Common myeloid progenitor, CD34-positive (primary cell): ENCODE measurements at regions of chr6 and their contacts with region 1.

Region 1: GRCh38 chr6:111997078-111997852 is 56.6 kb upstream of the CCN6 start:
- DNase-seq: peak; percentile 75 to 80 (median 78)
- H3K4me3 ChIP-seq: peak overlapping the region in 2 of 7 experiments; percentile 32 to 54
- H3K27ac ChIP-seq: no peak overlapping the region
- H3K4me1 ChIP-seq: peaks cover 0 to 11% (median 6%) of the 10 kb centered on the region in 4 experiments
- H3K27me3 ChIP-seq: peaks cover 0 to 3% (median 0%) of the 10 kb centered on the region in 5 experiments

Region 2: DNA sequence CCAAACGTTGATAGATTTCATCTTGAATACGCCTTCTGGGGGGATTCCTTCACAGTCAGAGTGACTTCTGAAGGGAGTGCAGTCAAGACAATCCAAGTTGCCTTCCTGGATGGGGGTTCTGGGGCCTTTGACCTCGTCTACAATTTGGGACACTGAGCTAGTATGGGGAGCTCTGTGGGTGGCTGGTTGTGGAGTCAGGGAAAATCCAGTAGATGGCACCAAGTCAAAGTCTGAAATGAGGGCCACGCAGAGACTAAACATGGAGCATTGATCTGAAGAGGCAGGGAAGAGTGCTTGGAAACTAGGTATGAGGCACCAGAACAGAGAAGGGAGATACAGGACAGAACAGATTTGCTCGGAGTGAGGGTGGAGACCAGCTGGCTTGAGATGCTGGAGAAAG is 13.1 kb after region 1 on chr6:
- CTCF ChIA-PET with region 1: interaction called, 19 read pairs
- POLR2A ChIA-PET with region 1: no interaction called
- DNase-seq: no peak
- H3K4me3 ChIP-seq: no peak overlapping the region
- H3K27ac ChIP-seq: no peak overlapping the region
- H3K4me1 ChIP-seq: peaks cover 0 to 13% (median 10%) of the 10 kb centered on the region in 4 experiments
- H3K27me3 ChIP-seq: no peaks in the 10 kb centered on the region

Region 3: DNA sequence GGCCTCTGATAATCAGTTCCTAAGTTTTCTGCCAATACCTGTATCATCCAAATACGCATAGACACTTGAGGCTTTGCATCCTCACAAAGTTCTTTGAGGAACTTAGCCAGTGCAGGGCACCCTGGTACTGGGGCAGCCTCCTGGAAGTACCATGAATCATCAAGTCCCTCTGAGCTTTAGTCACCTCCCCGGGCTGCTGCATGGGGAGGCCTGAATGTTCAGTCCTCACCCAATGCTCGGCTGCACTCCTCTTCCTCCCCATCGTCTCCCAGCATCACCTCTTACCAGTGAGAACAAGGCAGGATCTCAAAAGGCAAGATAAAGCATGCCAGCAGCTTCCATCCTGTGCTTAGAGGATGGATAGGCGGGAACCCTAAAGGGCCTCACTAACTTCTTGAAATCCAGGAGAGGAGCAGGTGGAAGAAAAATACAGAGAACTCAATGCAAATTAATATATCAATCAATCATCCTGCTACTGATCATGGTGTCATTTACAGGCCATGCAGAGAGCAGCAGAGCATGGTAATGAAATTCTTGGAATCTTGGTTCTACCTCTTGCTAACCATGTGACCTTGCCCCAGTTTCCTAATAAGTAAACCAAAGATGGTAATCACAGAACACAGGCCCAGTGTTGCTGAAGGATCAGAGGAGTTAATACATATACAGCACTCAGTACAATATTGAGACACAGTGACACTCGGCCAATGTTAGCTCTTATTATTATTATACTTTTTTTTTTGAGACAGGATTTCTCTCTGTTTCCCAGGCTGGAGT is 51.9 kb after region 1 on chr6:
- CTCF ChIA-PET with region 1: no interaction called
- POLR2A ChIA-PET with region 1: no interaction called
- DNase-seq: no peak
- H3K4me3 ChIP-seq: no peak overlapping the region
- H3K27ac ChIP-seq: no peak overlapping the region
- H3K4me1 ChIP-seq: no peaks in the 10 kb centered on the region
- H3K27me3 ChIP-seq: no peaks in the 10 kb centered on the region